ENCODE measurements at regions of chr6 and their contacts with region 1.

Region 1: GRCh38 chr6:127464881-127465459 is 5.8 kb upstream of the KIAA0408 start:
- DNase-seq: peak; percentile 57
- H3K4me3 ChIP-seq: no peak overlapping the region
- H3K27ac ChIP-seq: no peak overlapping the region
- H3K4me1 ChIP-seq: no peaks in the 10 kb centered on the region
- H3K27me3 ChIP-seq: no peaks in the 10 kb centered on the region
- CTCF ChIP-seq: peak; percentile 71

Region 2: DNA sequence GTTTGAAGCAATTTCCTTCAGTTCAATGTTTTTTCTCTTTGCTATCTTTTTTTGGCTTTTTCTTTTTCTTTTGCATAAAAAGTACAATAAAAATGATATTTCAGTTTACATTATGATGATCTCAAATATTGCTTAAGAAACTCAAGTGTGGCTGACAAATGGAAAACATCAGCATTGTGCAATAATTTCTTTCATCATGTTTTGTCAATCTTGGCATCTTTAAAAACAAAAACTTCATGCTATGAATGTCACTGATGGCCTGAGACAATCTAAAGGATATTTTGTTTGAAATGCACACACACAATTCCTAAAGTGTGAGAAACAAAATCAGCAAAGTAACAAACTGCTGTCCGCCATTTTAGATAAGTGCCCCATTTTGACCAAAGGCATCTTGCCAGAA is 68.0 kb after region 1 on chr6:
- intact Hi-C with region 1: loop called (anchors 5 kb)
- DNase-seq: no peak
- H3K4me3 ChIP-seq: no peak overlapping the region
- H3K27ac ChIP-seq: no peak overlapping the region
- H3K4me1 ChIP-seq: no peaks in the 10 kb centered on the region
- H3K27me3 ChIP-seq: no peaks in the 10 kb centered on the region
- CTCF ChIP-seq: no peak

Region 3: GRCh38 chr6:127641905-127642304 is 176.9 kb after region 1 on chr6:
- intact Hi-C with region 1: loop called (anchors 10 kb)
- DNase-seq: no peak
- H3K4me3 ChIP-seq: no peak overlapping the region
- H3K27ac ChIP-seq: no peak overlapping the region
- H3K4me1 ChIP-seq: no peaks in the 10 kb centered on the region
- H3K27me3 ChIP-seq: no peaks in the 10 kb centered on the region
- CTCF ChIP-seq: no peak

Measured in colonic mucosa (tissue), 4 donors.